ENCODE measurements at regions of chr16 and their contacts with region 1.

Region 1: GRCh38 chr16:5064564-5065314 is 1.0 kb downstream of the C16orf89 start:
- DNase-seq: peak; percentile 76

Region 2: GRCh38 chr16:4976079-4976478 is 88.7 kb before region 1 on chr16:
- intact Hi-C with region 1: loop called in 1 of 2 experiments (anchors 5 kb)
- DNase-seq: peak; percentile 14

Region 3: DNA sequence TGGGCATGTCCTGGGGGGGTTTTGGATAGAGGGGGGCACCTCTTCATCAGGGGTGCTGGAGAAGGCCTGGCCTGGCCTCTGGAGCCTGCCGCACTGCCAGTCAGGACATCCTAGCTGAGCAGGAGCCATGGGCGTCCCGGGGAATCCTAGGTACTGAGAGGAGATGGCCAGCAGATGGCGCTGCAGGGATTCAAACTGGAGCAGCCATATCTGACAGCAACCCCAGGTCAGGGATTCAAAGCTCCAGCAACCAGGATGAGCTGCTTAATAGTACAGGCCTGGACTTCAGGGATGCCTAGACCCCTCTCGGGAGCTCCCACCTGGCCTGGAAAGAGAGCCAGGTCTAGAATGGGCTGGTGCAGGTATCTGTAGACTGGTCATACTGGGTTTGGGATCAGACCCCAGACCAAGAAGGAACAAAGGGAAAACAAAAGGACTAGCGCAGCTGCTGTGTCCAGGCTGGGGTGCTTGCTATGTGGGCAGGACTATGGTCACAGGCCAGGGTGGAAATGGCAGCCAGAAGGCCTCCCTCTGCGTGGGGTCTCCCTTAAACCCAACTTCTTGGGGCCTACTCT is 1961.0 kb after region 1 on chr16:
- intact Hi-C with region 1: no loop called
- DNase-seq: peak; percentile 85